ENCODE measurements at regions of chr5 and their contacts with region 1.

Region 1: GRCh38 chr5:14871210-14872069 is at the start of gene ANKH:
- DNase-seq: peak; percentile 95
- H3K4me3 Mint-ChIP-seq: peak within 1 kb of the TSS; percentile 88
- H3K27ac Mint-ChIP-seq: peak within 1 kb of the TSS; percentile 91
- H3K4me1 Mint-ChIP-seq: peaks cover 26% of the 10 kb centered on the region
- H3K27me3 Mint-ChIP-seq: peaks cover 19% of the 10 kb centered on the region
- total RNA-seq, gene ANKH: 41.6 and 46.7 TPM in 2 replicates

Region 2: GRCh38 chr5:14581333-14581890 is 290.0 kb before region 1 on chr5 and contains the start of gene OTULINL:
- intact Hi-C with region 1: loop called (anchors 10 kb)
- DNase-seq: peak; percentile 95
- H3K4me3 Mint-ChIP-seq: peak within 1 kb of the TSS; percentile 83
- H3K27ac Mint-ChIP-seq: peak within 1 kb of the TSS; percentile 69
- H3K4me1 Mint-ChIP-seq: peaks cover 31% of the 10 kb centered on the region
- H3K27me3 Mint-ChIP-seq: peaks cover 16% of the 10 kb centered on the region
- total RNA-seq, gene OTULINL: 9.4 and 11.4 TPM in 2 replicates

Region 3: DNA sequence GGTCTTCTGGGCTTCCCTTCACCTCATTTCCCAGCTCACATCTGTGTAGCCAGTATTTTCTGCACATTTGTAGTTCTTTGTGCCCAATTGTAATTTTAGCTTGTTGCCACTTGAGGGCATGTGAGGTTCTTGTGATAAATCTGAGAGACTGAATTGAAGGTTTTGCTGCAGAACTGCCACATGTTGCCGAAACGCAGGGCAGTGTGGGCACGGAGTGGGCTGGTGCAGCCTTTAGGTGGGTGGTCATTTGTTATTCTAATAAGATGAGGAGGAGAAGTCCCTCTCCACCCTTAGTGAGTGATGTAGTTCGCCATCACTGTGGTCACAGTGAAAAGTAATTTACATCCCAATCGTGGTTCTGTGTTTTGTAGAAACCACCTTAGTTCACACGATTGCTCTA is 185.7 kb before region 1 on chr5:
- intact Hi-C with region 1: loop called (anchors 5 kb)
- DNase-seq: peak; percentile 83
- H3K4me3 Mint-ChIP-seq: no peak overlapping the region
- H3K27ac Mint-ChIP-seq: peak overlapping the region; percentile 42
- H3K4me1 Mint-ChIP-seq: peaks cover 15% of the 10 kb centered on the region
- H3K27me3 Mint-ChIP-seq: no peaks in the 10 kb centered on the region

Region 4: DNA sequence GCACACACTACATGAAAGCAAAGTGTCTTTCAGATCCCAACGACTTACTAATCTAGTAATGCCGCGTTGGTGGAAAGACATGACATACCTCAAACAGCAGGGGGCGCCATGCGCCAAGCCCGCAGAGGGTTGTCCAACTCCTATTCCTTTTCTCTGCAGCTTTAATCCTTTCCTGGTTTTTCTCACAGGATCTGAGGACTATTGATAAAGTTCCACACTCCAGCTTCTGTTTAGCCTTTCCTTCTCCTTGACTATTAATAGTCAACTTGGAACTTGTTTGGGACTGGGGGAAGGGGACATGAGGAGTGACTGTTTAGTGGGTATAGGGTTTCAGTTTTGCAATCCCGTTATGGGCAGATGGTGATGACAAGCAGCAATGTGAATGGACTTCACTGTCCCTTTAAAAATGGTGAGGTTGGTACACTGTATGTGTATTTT is 144.0 kb before region 1 on chr5:
- intact Hi-C with region 1: loop called (anchors 1 kb)
- DNase-seq: peak; percentile 92
- H3K4me3 Mint-ChIP-seq: no peak overlapping the region
- H3K27ac Mint-ChIP-seq: no peak overlapping the region
- H3K4me1 Mint-ChIP-seq: peaks cover 4% of the 10 kb centered on the region
- H3K27me3 Mint-ChIP-seq: no peaks in the 10 kb centered on the region

Region 5: DNA sequence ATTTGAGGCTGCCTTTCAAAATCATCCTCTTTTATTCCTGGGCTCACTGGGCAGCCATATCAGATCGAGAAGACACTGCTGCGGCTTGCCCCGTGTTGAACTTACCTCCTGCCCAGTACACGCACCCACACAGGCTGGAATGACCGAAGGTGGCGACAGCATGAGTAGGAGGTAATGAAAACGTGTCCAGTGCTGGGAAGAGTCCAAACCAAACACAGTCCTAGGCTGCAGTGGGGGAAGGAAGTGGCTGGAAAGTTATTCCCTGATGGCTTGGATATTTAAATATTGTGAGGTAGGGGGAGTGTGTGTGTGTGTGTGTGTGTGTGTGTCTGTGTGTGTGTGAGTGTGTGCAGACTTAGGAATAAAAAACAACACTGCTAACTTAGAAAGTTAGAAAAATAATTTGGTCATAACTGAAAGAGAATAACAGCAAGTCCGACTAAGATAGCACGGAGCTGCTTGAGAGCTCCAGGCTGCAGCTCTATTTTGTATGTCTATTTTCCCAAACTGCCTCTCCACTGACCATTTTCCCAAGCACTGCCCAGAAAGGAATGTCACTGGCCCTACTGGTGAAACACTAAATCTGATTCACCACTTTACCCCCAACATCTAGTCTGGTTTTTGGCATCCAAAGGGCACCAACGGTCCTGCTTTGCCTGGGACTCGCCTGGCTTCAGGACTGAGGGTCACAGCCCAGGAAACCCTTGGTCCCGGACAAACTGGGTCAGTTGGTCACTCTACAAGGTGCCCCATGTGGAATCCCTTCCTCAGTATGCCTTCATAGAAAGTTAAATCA is 41.0 kb before region 1 on chr5:
- intact Hi-C with region 1: no loop called
- DNase-seq: no peak
- H3K4me3 Mint-ChIP-seq: no peak overlapping the region
- H3K27ac Mint-ChIP-seq: no peak overlapping the region
- H3K4me1 Mint-ChIP-seq: peaks cover 5% of the 10 kb centered on the region
- H3K27me3 Mint-ChIP-seq: no peaks in the 10 kb centered on the region

Region 6: GRCh38 chr5:14925326-14925725 is 53.9 kb after region 1 on chr5:
- intact Hi-C with region 1: loop called (anchors 1 kb)
- DNase-seq: no peak
- H3K4me3 Mint-ChIP-seq: peak overlapping the region; percentile 60
- H3K27ac Mint-ChIP-seq: peak overlapping the region; percentile 87
- H3K4me1 Mint-ChIP-seq: peaks cover 52% of the 10 kb centered on the region
- H3K27me3 Mint-ChIP-seq: no peaks in the 10 kb centered on the region

Region 7: DNA sequence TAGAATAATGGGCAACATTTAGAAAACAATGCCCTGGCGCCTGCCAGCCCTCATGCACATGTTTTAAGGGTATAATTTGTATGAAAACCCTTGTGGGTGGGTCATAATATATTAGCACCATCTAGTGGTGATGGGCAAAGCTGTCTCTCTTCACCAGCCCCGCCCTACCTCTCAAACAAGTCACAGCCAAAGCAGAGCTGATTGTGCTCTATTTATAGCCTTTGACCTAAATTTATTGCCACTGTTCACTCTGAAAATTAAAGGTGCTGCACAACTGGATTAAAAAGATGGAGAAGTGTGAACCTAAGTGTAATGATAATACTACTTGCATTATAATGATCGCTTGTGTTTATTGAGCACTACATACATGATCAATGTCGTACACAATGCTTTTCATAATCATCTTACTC is 132.1 kb after region 1 on chr5:
- intact Hi-C with region 1: loop called (anchors 2 kb)
- DNase-seq: peak; percentile 85
- H3K4me3 Mint-ChIP-seq: no peak overlapping the region
- H3K27ac Mint-ChIP-seq: no peak overlapping the region
- H3K4me1 Mint-ChIP-seq: peaks cover 8% of the 10 kb centered on the region
- H3K27me3 Mint-ChIP-seq: peaks cover 38% of the 10 kb centered on the region

Measured in activated CD4-positive, alpha-beta T cell treated with anti-CD3 and anti-CD28 coated beads, Interleukin-2, amount 10 ng/mL, durations not matched to agents 24 days and 14 days (primary cell).